Calu3 (cell line): ENCODE measurements at regions of chr4 and their contacts with region 1.

Region 1: GRCh38 chr4:48963042-48963679 is 22.9 kb upstream of the CWH43 start:
- DNase-seq: peak; percentile 80
- H3K4me3 Mint-ChIP-seq: no peak overlapping the region
- H3K27ac Mint-ChIP-seq: no peak overlapping the region
- H3K4me1 Mint-ChIP-seq: peaks cover 29% of the 10 kb centered on the region
- H3K27me3 Mint-ChIP-seq: no peaks in the 10 kb centered on the region
- CTCF ChIP-seq: peak; percentile 82

Region 2: DNA sequence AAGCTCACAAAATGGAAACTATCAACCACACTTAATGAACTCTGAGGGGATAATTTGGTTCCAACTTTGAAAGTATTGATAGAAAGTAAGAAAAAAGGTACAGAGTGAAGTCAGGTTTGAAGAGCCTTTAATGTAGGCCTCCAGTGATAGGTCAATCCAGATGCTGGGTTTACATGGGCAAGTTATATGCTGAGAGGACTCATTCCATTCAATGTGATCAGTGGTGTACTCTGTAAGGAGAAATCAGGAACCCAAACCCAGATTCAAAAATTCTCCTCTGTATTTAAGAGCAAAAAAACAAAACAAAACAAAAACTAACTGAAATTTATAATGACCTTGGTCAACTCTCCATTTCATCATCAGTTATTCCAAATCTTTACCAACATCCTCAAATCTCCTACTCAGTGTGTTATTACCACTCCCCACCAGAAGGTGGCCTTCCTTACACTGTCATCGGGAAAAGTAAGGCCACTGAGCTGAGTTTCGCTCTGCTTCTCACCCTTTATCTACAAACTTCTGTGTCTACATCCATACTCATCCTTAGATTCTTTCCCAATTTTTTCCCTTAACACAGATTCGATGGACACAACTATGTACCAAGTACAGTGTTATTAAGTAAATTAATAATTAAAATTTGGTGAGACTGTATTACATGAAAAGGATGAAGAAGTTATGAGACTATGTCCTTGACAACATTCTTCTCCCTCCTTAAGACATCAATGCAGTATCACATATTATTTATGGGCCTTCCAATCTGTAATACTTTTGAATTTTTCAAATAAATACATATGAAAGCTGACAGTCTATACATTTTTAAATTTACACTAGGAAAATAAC is 384.8 kb before region 1 on chr4:
- CTCF ChIA-PET with region 1: no interaction called
- intact Hi-C with region 1: loop called (anchors 10 kb)
- DNase-seq: peak; percentile 53
- H3K4me3 Mint-ChIP-seq: no peak overlapping the region
- H3K27ac Mint-ChIP-seq: no peak overlapping the region
- H3K4me1 Mint-ChIP-seq: no peaks in the 10 kb centered on the region
- H3K27me3 Mint-ChIP-seq: no peaks in the 10 kb centered on the region
- CTCF ChIP-seq: peak; percentile 32

Region 3: GRCh38 chr4:48698029-48698971 is 264.9 kb before region 1 on chr4:
- CTCF ChIA-PET with region 1: no interaction called
- intact Hi-C with region 1: loop called (anchors 10 kb)
- DNase-seq: peak; percentile 75
- H3K4me3 Mint-ChIP-seq: peak overlapping the region; percentile 19
- H3K27ac Mint-ChIP-seq: peak overlapping the region; percentile 86
- H3K4me1 Mint-ChIP-seq: peaks cover 35% of the 10 kb centered on the region
- H3K27me3 Mint-ChIP-seq: no peaks in the 10 kb centered on the region
- CTCF ChIP-seq: no peak

Region 4: DNA sequence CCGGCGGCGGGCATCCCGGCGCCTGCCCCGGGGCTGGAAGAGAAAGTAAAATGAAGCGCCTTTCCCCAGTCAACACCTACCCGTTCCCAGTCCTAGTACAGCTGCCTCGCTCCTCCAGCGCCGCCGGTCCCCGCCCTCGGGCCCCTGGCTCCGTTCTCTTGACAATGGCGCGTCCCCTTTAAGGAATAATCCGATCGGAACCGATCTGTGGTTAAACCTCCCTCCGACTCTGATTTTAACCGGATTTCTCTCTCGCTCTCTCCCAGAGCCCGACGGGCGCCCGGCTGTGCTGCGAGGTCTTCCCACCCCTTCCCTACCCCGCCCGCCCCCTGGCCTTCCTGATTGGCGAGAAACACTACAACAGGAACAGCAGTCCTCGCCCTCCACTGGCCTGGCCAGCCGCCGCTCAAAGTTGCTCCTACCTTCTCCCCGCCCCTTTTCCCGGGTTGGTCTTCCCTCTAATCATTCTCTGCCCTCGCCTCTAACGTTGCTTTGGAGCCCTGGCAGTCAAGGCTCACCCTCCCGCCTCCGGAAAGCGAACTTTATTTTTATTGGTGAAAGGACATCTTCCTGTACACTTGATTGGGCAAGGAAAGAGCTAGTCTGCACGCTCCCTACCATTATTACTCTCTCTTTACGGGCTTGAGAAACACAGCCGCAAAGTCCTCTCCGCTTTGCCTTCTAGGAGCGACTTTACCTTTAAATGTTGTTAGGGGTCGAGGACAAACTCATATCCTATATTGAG is 183.0 kb before region 1 on chr4 and contains the start of gene FRYL:
- CTCF ChIA-PET with region 1: no interaction called
- intact Hi-C with region 1: loop called (anchors 5 kb)
- DNase-seq: peak; percentile 96
- H3K4me3 Mint-ChIP-seq: peak within 1 kb of the TSS; percentile 93
- H3K27ac Mint-ChIP-seq: peak within 1 kb of the TSS; percentile 87
- H3K4me1 Mint-ChIP-seq: peaks cover 8% of the 10 kb centered on the region
- H3K27me3 Mint-ChIP-seq: no peaks in the 10 kb centered on the region
- CTCF ChIP-seq: no peak
- total RNA-seq, gene FRYL: 45.8 and 52.5 TPM in 2 replicates

Region 5: DNA sequence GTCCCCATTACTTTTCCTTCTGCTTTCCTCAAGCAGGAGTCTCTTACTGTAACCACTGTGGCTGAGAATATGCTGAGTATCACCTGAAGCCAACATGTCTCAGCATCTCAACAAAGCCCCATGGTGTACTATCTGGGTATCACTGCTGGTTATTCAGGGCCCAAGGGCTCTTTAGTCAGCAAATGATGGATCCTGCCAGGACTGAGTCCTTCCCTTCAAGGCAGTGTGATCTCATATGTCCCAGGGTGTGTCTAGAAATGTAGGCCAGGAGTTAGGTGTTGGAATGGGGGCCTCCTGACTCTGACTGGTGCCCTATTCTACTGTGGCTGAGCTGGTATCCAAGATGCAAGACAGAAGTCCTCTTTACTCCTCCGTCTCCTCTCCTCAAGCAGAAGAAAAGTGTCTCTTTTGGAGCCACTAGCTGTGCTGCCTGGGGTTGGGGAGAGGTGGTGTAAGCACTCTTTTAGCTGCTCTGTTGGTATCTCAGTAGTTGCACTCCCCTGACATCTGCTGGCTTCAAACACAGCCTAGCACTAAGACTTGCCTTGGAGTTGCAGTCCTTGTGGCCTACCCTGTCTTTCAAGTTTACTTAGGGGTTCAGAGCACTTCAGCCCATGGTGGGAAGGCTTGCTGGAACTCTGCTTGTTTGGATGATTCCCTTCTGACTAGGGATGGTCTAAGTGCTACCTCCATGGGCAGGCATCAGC is 85.2 kb before region 1 on chr4:
- CTCF ChIA-PET with region 1: no interaction called
- intact Hi-C with region 1: loop called (anchors 10 kb)
- DNase-seq: no peak
- H3K4me3 Mint-ChIP-seq: no peak overlapping the region
- H3K27ac Mint-ChIP-seq: no peak overlapping the region
- H3K4me1 Mint-ChIP-seq: no peaks in the 10 kb centered on the region
- H3K27me3 Mint-ChIP-seq: no peaks in the 10 kb centered on the region
- CTCF ChIP-seq: no peak

Region 6: GRCh38 chr4:48906206-48907173 is 56.7 kb before region 1 on chr4 and contains the start of gene OCIAD2:
- CTCF ChIA-PET with region 1: no interaction called
- intact Hi-C with region 1: loop called (anchors 5 kb)
- DNase-seq: peak; percentile 80
- H3K4me3 Mint-ChIP-seq: peak within 1 kb of the TSS; percentile 96
- H3K27ac Mint-ChIP-seq: peak within 1 kb of the TSS; percentile 97
- H3K4me1 Mint-ChIP-seq: peaks cover 36% of the 10 kb centered on the region
- H3K27me3 Mint-ChIP-seq: no peaks in the 10 kb centered on the region
- CTCF ChIP-seq: no peak
- total RNA-seq, gene OCIAD2: 141 and 182 TPM in 2 replicates

Region 7: DNA sequence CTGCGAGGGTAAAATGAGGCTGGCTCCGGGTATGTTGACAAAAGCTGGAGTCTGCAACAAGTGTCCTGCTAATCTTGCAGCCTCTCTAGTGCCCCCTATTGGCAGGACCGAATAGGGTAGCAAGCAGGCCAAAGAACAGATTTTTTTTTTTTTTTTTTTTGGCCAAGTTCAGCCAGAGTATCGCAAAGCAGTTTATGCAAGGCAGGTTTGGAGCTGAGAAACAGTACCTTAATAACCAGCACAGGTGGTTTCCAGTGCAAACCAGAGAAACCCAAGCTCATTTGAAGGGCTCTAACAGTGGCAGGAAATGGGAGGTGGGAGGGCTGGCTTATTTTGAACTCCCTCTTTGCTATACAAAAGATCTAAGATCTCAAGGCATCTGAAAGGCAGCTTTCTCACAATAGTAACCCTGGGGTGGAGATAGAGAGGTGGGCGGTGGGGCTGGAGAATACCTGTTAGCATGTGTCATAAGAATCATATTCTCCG is 18.4 kb before region 1 on chr4:
- CTCF ChIA-PET with region 1: interaction called, 5 read pairs
- intact Hi-C with region 1: loop called (anchors 1 kb)
- DNase-seq: peak; percentile 48
- H3K4me3 Mint-ChIP-seq: peak overlapping the region; percentile 59
- H3K27ac Mint-ChIP-seq: peak overlapping the region; percentile 98
- H3K4me1 Mint-ChIP-seq: peaks cover 39% of the 10 kb centered on the region
- H3K27me3 Mint-ChIP-seq: no peaks in the 10 kb centered on the region
- CTCF ChIP-seq: peak; percentile 39